WTC11 (cell line): ENCODE measurements at regions of chr6 and their contacts with region 1.

Region 1: DNA sequence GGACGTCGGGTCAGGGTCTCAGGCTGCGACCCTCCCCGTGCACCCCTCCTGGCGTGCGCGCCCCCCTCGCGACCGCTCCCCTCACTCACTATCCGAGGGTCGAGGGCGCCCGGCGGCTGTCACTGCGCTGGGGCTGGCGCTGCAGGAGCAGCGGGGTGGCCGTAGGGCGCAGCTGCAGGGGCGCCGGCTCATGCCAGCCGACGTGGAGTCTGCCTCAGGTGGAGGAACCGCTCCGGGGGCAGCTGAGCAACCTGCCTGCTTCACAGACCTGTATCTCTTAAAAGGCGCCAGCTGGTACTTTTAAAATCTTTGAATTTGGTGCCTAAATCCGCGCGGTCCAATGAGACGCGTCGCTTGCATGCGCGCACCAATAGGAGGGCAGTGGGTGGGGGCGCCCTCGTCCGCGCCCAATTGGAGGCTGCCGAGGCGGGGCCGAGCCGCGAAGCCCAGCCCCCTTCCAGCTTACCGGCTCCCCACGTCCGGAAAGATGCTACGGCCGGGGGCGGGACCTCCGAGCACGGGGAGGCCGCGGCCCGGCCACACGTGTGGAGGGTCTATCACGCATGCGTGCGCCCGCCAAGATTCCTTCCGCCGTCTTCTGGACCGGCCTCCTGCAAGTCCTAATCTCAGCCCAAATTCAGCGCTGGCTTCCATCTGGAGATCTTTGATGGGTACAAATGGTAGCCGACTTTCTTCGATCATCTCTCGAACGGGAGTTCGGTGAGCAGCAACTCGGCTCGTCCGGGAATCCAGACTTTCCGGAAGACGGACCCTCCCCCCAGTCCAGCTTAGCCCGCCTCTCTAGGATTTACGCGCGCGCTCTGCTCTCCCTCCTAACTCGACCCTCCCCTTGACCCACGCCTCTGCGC is at the start of gene FBXO5:
- DNase-seq: peak; percentile 97
- ATAC-seq: peak; percentile 92
- H3K4me3 Mint-ChIP-seq: peak within 1 kb of the TSS; percentile 96
- H3K27ac Mint-ChIP-seq: peak within 1 kb of the TSS; percentile 100
- H3K4me1 Mint-ChIP-seq: peaks cover 40% of the 10 kb centered on the region
- H3K27me3 Mint-ChIP-seq: no peaks in the 10 kb centered on the region
- CTCF ChIP-seq: no peak
- total RNA-seq, gene FBXO5: 40.5 to 47.4 TPM (median 42.3 TPM) in 3 replicates

Region 2: DNA sequence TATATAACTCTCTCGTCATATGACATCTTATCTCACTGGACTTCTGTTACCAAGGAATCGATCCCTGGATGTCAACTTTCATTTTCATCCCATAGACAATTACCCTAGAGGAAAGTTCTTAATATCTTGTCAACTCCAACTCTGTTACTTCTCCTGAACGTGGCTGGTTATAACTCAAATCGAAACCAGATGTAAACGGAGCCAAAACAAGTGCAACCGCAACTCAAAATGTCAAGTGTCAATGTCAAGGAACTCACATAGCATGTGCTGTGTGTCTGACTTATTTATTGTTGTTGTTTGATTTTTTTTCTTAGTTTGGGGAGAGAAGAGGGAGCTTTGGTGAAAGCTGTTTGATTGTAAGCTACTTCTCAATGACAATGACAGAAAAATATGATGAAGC is 123.8 kb before region 1 on chr6:
- CTCF ChIA-PET with region 1: no interaction called
- POLR2A ChIA-PET with region 1: no interaction called
- DNase-seq: no peak
- ATAC-seq: no peak
- H3K4me3 Mint-ChIP-seq: no peak overlapping the region
- H3K27ac Mint-ChIP-seq: no peak overlapping the region
- H3K4me1 Mint-ChIP-seq: no peaks in the 10 kb centered on the region; the same call in 1 of the 2 replicates
- H3K27me3 Mint-ChIP-seq: no peaks in the 10 kb centered on the region
- CTCF ChIP-seq: no peak

Region 3: GRCh38 chr6:153002607-153003365 is 19.8 kb after region 1 on chr6 and contains the start of gene MTRF1L:
- CTCF ChIA-PET with region 1: no interaction called
- POLR2A ChIA-PET with region 1: interaction called, 16 read pairs
- DNase-seq: peak; percentile 96
- ATAC-seq: peak; percentile 94
- H3K4me3 Mint-ChIP-seq: peak within 1 kb of the TSS; percentile 96
- H3K27ac Mint-ChIP-seq: peak within 1 kb of the TSS; percentile 100
- H3K4me1 Mint-ChIP-seq: peaks cover 23% of the 10 kb centered on the region
- H3K27me3 Mint-ChIP-seq: no peaks in the 10 kb centered on the region
- CTCF ChIP-seq: no peak
- total RNA-seq, gene MTRF1L: 15.3 to 16.6 TPM (median 15.8 TPM) in 3 replicates